ENCODE measurements at regions of chr7 and their contacts with region 1.

Region 1: DNA sequence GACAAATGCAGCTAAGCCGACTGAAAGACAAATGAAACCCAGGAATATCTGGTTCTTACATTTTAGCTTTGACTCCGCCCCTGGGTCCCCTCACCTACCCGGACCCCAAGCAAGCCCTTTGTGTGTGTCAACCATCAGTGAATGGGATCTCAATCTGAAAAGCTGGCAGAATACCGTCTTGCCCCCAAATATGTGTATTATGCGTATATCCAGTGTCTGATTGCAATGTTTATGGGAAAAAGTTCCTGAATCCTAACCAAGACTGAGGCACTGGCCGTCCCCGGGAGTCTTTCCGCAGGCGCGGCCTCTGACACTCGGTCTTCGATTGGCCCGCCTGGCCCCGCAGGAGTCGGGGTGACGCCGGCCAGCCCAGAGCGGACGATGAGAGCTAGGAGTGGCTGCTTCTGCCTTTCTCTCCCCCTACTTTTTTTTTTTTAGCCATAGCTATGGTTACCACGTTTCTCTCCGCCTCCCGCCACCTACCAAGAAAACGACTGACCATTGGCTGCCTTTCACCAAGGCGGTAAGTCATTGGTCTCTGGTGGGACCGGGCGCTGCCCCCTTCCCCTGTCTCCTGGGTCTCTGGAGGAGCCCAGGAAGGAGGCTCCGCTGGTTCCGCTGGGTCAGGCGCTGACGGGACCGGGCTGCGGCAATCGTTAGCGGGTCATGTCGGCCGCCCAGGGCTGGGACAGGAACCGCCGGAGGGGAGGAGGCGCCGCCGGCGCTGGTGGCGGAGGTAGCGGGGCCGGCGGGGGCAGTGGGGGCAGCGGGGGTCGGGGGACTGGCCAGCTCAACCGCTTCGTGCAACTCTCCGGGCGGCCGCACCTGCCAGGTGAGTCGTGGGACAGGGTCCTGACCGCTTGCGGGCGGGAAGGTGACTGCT is at the start of gene KLHDC10:
- DNase-seq: peak; percentile 98
- ATAC-seq: peak; percentile 98
- total RNA-seq, gene KLHDC10: 27.6 TPM

Region 2: GRCh38 chr7:130037703-130038102 is 32.5 kb before region 1 on chr7:
- intact Hi-C with region 1: no loop called
- DNase-seq: no peak
- ATAC-seq: no peak

Region 3: DNA sequence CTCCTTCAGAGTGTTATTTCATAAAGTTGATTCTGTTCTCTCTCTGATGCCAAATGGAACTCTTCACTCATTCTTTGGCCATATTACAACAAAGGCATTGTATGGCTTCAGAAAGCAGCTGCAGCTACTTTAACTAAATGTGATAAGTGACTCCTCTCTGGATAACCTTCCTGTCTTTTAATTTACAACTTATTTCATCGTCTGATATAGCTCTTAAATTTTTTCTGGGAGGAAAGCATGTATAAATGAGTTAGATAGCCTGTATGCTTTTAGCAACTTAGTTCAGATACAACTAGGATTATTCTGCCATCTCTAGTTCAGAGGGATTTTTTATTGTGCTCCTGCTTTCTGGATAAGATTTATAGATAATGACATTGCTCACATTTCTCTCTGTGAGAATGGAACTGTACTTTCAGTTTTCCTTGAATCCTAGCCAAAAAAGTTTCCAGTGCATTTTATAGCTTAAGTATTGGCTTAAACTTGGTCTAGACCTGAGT is 57.6 kb after region 1 on chr7:
- intact Hi-C with region 1: no loop called
- DNase-seq: no peak
- ATAC-seq: peak; percentile 39

Region 4: DNA sequence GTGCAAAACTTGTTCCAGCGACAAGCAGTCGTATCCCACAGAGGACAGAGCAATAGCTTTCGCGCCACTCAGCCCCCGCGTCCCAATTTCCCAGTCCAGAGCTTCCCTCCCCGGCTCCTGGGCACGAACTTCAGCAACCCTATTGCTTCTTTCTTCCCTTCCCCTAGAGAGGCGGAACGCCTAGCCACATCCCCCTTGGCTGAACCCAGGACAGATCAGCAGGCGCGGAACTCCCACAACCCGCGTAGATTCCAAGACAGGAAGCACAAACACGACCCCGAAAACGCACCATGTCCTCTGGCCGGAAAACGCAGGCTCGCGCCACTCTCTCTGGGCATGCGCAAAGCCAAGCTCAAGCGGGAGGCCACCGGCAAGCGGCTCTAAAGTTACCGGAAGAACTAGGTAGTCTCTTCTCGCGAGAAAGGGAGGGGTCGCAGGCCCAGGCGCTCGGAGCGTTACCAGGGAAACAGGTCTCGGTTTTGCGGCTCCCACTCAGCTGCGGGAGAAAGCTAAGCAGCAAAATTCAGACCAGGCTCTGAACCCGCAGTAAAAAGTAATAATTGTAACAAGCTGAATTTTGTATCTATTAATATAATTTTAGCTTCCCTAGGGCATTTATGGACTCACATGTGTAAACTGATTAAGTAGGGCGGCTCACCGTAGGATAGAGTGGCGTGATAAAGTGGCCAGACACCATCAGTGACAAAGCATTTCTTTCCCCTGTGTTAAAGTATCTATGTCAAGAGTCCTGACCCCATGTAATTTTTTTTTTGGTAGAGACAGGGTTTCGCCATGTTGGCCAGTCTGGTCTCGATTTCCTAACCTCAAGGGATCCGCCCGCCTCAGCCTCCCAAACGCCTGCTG is 135.1 kb after region 1 on chr7 and contains the start of gene TMEM209:
- intact Hi-C with region 1: loop called (anchors 5 kb)
- DNase-seq: peak; percentile 96
- ATAC-seq: peak; percentile 99
- total RNA-seq, gene TMEM209: 8.6 TPM

Region 5: GRCh38 chr7:130721486-130722280 is 651.5 kb after region 1 on chr7:
- intact Hi-C with region 1: loop called (anchors 5 kb)
- DNase-seq: peak; percentile 75
- ATAC-seq: peak; percentile 88

Region 6: DNA sequence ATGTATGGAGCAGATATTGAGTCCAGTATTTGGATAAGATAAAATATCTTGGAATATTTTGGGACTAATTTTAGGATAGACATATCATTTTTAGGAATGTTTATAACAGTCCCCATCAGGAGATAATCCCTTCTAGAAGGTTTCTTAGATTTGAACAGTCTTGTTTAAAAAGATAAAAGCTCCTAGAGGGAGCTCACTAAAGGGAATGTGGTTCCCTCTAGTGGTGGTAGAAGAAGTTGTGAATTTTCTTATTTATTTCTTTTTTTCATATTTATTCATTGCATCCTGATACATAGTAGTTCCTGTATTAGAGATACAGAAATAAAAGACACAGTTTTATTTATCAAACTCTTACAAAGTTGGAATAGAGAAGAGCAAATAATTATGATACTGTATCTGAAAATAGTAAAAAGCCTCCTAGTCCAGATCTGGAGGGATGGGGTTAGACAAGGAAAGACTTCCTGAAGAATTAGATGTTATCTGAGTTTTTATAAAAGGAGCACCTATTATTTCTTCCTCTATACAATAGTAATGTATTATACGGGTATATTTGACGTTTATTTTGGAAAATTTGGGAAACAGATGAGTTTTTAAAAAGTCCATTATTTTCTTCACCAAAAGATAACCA is 688.3 kb after region 1 on chr7:
- intact Hi-C with region 1: loop called (anchors 10 kb)
- DNase-seq: no peak
- ATAC-seq: no peak

Region 7: DNA sequence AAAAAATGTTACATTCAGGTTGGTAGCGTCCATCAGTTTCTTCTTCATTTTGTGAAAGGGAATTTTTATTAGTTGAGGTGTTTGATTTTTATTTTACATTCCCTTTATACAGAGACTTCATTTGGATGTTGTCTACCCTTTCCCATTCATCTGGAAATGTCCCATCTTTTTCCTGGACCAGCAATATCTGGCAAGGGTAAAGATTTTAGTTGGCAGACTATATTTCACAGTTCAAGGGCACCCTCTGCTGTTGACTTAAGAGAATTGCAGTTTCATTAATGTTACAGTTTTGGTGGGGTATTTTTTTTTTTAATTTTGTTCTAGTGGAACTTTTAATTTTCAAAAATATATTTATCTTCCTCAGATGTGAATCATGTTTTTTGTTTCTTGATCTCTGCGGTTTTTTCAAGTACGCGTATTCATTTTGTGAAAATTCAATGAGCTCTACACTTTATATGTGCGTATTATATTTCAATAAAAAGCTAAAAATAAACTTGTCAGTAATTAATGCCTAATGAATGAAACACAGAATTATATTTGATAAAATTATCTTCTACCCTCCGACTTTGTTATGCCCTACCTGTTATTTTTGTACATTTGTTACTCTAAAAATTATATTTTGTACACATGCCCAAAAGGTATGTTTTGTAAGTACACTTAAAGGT is 761.7 kb after region 1 on chr7:
- intact Hi-C with region 1: loop called (anchors 5 kb)
- DNase-seq: no peak
- ATAC-seq: no peak

Measured in Right ventricle myocardium inferior (tissue), 1 donor.